WTC11 (cell line): ENCODE measurements at regions of chr19 and their contacts with region 1.

Region 1: GRCh38 chr19:2475702-2476450 is at the start of gene GADD45B:
- DNase-seq: peak; percentile 95
- ATAC-seq: peak; percentile 51
- H3K4me3 Mint-ChIP-seq: peak within 1 kb of the TSS; percentile 93
- H3K27ac Mint-ChIP-seq: peak within 1 kb of the TSS; percentile 88
- H3K4me1 Mint-ChIP-seq: peaks cover 24% of the 10 kb centered on the region
- H3K27me3 Mint-ChIP-seq: peaks cover 47% of the 10 kb centered on the region
- CTCF ChIP-seq: no peak
- total RNA-seq, gene GADD45B: 17.9 to 27.5 TPM (median 23.2 TPM) in 3 replicates

Region 2: DNA sequence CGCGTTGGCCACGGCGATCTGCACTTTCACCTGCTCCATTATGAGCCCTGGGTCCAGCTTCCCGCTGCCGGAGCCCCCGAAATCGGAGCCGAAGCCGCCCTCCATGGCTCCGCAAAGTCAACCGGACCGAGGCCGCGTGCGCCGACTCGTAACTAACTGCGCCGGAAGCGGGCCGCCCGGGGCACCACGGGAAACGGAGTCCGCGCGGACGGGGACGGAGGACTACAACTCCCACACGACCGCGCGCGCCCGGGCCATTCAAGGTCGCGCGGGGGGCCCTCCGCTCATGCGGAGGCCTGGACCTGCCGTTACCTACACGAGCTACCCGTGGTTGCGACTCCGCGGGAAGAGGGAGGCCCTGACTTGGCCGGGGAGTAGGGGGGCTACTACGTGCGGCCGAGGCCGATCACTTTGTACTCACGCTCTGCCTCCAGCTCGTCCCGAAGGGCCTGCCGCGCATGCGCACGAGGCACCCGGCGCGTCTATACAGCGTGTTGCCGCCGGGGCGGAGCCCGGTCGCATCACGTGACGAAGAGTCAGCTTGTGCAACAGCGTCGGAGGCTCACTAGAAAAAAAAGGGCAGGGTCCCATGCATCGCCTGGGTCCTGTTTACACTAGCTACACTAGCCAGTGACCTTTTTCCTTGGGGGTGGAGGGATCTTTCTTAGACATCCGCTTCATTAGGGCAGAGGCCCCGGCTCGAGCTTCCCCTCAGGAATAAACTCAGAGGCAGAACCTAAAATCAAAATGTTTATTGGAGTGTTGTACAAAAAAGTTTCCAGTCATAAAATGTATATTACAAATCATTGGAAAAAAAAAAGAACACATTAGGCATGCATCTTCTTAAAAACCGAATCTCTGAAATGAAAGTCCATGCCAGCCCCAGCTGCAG is 48.2 kb before region 1 on chr19 and contains the start of gene TIMM13:
- CTCF ChIA-PET with region 1: interaction called, 5 read pairs
- POLR2A ChIA-PET with region 1: interaction called, 14 read pairs
- DNase-seq: peak; percentile 97
- ATAC-seq: peak; percentile 50
- H3K4me3 Mint-ChIP-seq: peak within 1 kb of the TSS; percentile 88
- H3K27ac Mint-ChIP-seq: peak within 1 kb of the TSS; percentile 97
- H3K4me1 Mint-ChIP-seq: peaks cover 27% of the 10 kb centered on the region
- H3K27me3 Mint-ChIP-seq: no peaks in the 10 kb centered on the region
- CTCF ChIP-seq: no peak
- total RNA-seq, gene TIMM13: 296 to 342 TPM (median 309 TPM) in 3 replicates

Region 3: GRCh38 chr19:2446271-2446779 is 29.6 kb before region 1 on chr19:
- CTCF ChIA-PET with region 1: no interaction called
- POLR2A ChIA-PET with region 1: no interaction called
- DNase-seq: no peak
- ATAC-seq: peak; percentile 33; the same call in 1 of the 2 replicates
- H3K4me3 Mint-ChIP-seq: no peak overlapping the region
- H3K27ac Mint-ChIP-seq: peak overlapping the region; percentile 86; the same call in 1 of the 2 replicates
- H3K4me1 Mint-ChIP-seq: peaks cover 6% of the 10 kb centered on the region
- H3K27me3 Mint-ChIP-seq: no peaks in the 10 kb centered on the region
- CTCF ChIP-seq: no peak

Region 4: DNA sequence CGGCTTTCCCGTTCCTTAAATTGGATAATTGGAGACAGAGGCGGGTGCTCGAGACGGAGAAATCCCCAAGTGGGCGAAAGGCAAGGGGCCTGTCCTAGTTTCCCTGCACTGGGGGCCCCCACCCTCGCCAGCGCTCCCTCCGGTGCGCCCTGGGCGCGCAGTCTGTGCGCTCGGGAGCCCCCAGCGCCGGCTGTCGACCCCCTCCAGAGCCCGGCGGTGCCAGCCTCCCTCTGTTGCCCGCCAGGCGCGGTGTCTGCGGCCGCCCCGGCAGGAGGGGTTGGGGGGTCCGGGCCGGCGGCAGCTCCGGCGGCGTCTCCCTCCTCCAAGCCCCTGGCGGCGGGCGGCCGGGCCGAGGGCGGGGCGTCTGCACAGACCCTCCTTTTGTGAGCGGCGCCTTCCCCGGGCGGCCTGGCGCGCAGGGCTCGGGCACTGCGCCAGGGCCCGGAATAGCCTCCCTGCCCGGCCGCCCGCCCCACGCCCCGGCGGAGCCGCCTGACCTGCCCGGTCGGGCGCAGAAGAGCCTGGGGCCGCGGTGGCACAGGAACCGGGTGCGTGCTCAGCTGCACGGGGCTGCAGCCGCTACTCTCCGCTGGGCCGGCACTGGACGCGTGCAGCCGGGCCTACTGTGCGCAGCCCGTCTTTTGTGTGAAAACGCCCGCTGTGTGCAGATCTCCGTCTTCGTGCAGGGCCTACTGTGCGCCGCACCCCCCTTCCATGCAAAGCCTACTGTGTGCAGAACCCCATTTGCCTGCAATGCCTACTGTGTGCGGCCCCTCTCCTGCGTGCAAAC is 13.3 kb after region 1 on chr19:
- CTCF ChIA-PET with region 1: interaction called, 12 read pairs
- POLR2A ChIA-PET with region 1: interaction called, 14 read pairs
- DNase-seq: peak; percentile 66
- ATAC-seq: peak; percentile 79
- H3K4me3 Mint-ChIP-seq: peak overlapping the region; percentile 69
- H3K27ac Mint-ChIP-seq: no peak overlapping the region
- H3K4me1 Mint-ChIP-seq: peaks cover 11% of the 10 kb centered on the region; the same call in 1 of the 2 replicates
- H3K27me3 Mint-ChIP-seq: peaks cover 69% of the 10 kb centered on the region
- CTCF ChIP-seq: no peak

Region 5: DNA sequence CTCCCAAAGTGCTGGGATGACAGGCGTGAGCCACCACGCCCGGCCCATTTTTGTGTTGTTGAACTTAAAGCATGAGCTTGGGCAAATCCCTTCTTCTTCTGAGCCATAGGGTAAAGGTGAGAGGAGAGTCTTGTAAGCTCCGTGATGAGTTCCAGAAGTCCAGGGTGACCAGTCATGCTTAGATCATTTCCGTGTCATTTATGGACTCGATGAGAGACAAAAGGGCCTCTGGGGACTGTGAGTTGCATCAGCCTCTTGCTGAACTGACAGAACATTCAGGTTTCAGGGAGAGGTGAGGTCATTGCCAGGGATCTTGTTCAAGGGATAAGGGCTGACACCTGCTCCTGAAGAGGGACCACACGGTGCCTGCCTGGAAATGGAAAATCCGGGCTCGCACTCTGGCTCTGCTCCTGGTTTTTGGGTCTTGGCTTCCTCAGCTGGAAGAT is 53.6 kb after region 1 on chr19:
- CTCF ChIA-PET with region 1: interaction called, 3 read pairs
- POLR2A ChIA-PET with region 1: interaction called, 12 read pairs
- DNase-seq: no peak
- ATAC-seq: no peak
- H3K4me3 Mint-ChIP-seq: no peak overlapping the region
- H3K27ac Mint-ChIP-seq: no peak overlapping the region
- H3K4me1 Mint-ChIP-seq: peaks cover 8% of the 10 kb centered on the region
- H3K27me3 Mint-ChIP-seq: no peaks in the 10 kb centered on the region
- CTCF ChIP-seq: no peak

Region 6: GRCh38 chr19:2602391-2603181 is 126.7 kb after region 1 on chr19:
- CTCF ChIA-PET with region 1: interaction called, 114 read pairs
- POLR2A ChIA-PET with region 1: interaction called, 28 read pairs
- DNase-seq: peak; percentile 72
- ATAC-seq: peak; percentile 72
- H3K4me3 Mint-ChIP-seq: peak overlapping the region; percentile 63
- H3K27ac Mint-ChIP-seq: peak overlapping the region; percentile 84
- H3K4me1 Mint-ChIP-seq: peaks cover 19% of the 10 kb centered on the region
- H3K27me3 Mint-ChIP-seq: peaks cover 20% of the 10 kb centered on the region
- CTCF ChIP-seq: no peak

Region 7: GRCh38 chr19:2663920-2664571 is 188.2 kb after region 1 on chr19:
- CTCF ChIA-PET with region 1: no interaction called
- POLR2A ChIA-PET with region 1: no interaction called
- DNase-seq: no peak
- ATAC-seq: no peak
- H3K4me3 Mint-ChIP-seq: no peak overlapping the region
- H3K27ac Mint-ChIP-seq: no peak overlapping the region
- H3K4me1 Mint-ChIP-seq: 0 out of 2 replicates have a peak, but pooled peaks cover 3% of the 10 kb centered on the region
- H3K27me3 Mint-ChIP-seq: peaks cover 3% of the 10 kb centered on the region
- CTCF ChIP-seq: no peak